CD14-positive monocyte (primary cell): ENCODE measurements at regions of chr6 and their contacts with region 1.

Region 1: GRCh38 chr6:32700391-32701040 is 34.1 kb upstream of the HLA-DQB1 start:
- DNase-seq: peak; percentile 29 to 67 (median 50)
- H3K4me3 ChIP-seq: no peak overlapping the region
- H3K4me3 Mint-ChIP-seq: peak overlapping the region in 1 of 2 donors; percentile 63
- H3K27ac ChIP-seq: no peak overlapping the region
- H3K27ac Mint-ChIP-seq: peak overlapping the region in 2 of 7 donors; percentile 47 to 54
- H3K4me1 ChIP-seq: peaks cover 7 to 8% of the 10 kb centered on the region in 2 donors
- H3K4me1 Mint-ChIP-seq: peaks cover 12% of the 10 kb centered on the region
- H3K27me3 ChIP-seq: peaks cover 8 to 20% of the 10 kb centered on the region in 2 donors
- H3K27me3 Mint-ChIP-seq: peaks cover 13 to 32% (median 26%) of the 10 kb centered on the region in 3 donors
- CTCF ChIP-seq: peak; percentile 80

Region 2: DNA sequence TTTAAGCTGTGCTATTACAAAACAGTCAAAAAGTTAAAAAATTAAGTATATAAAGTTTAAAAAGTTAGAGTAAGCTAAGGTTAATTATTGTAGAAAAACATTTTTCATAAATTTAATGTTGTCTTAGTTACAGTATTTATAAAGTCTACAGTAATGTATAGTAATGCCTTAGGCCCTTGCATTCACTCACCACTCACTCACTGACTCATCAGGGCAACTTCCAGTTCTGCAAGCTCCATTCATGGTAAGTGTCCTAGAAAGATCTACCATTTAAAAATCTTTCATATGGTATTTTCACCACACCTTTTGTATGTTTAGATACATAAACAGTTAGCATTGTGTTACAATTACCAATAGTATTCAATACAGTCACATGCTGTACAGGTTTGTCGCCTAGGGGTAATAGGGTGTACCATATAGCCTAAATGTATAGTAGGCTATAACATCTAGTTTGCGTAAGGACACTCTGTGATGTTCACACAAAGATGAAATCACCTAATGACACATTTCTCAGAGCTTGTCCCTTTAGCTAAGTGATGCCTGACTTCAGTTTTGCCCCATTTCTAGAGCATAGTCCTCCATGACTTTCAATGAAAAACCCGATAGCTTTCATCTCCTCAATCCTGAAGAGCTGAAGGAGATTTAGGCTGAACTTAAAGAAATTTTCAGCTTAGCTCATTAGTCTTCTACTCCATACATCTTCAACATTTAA is 275.8 kb before region 1 on chr6:
- intact Hi-C with region 1: loop called in 1 of 2 experiments (anchors 5 kb)
- DNase-seq: peak in 1 of 3 donors; percentile 35
- H3K4me3 ChIP-seq: no peak overlapping the region
- H3K4me3 Mint-ChIP-seq: no peak overlapping the region
- H3K27ac ChIP-seq: no peak overlapping the region
- H3K27ac Mint-ChIP-seq: no peak overlapping the region
- H3K4me1 ChIP-seq: no peaks in the 10 kb centered on the region
- H3K4me1 Mint-ChIP-seq: no peaks in the 10 kb centered on the region
- H3K27me3 ChIP-seq: peaks cover 0 to 5% of the 10 kb centered on the region in 2 donors
- H3K27me3 Mint-ChIP-seq: peaks cover 0 to 12% (median 7%) of the 10 kb centered on the region in 3 donors
- CTCF ChIP-seq: no peak

Region 3: GRCh38 chr6:32432050-32432450 is 268.5 kb before region 1 on chr6:
- intact Hi-C with region 1: loop called (anchors 5 kb)
- DNase-seq: peak; percentile 34 to 71 (median 62)
- H3K4me3 ChIP-seq: no peak overlapping the region
- H3K4me3 Mint-ChIP-seq: no peak overlapping the region
- H3K27ac ChIP-seq: no peak overlapping the region
- H3K27ac Mint-ChIP-seq: no peak overlapping the region
- H3K4me1 ChIP-seq: peaks cover 10 to 11% of the 10 kb centered on the region in 2 donors
- H3K4me1 Mint-ChIP-seq: peaks cover 9% of the 10 kb centered on the region
- H3K27me3 ChIP-seq: no peaks in the 10 kb centered on the region
- H3K27me3 Mint-ChIP-seq: peaks cover 0 to 2% (median 0%) of the 10 kb centered on the region in 3 donors
- CTCF ChIP-seq: peak; percentile 77

Region 4: DNA sequence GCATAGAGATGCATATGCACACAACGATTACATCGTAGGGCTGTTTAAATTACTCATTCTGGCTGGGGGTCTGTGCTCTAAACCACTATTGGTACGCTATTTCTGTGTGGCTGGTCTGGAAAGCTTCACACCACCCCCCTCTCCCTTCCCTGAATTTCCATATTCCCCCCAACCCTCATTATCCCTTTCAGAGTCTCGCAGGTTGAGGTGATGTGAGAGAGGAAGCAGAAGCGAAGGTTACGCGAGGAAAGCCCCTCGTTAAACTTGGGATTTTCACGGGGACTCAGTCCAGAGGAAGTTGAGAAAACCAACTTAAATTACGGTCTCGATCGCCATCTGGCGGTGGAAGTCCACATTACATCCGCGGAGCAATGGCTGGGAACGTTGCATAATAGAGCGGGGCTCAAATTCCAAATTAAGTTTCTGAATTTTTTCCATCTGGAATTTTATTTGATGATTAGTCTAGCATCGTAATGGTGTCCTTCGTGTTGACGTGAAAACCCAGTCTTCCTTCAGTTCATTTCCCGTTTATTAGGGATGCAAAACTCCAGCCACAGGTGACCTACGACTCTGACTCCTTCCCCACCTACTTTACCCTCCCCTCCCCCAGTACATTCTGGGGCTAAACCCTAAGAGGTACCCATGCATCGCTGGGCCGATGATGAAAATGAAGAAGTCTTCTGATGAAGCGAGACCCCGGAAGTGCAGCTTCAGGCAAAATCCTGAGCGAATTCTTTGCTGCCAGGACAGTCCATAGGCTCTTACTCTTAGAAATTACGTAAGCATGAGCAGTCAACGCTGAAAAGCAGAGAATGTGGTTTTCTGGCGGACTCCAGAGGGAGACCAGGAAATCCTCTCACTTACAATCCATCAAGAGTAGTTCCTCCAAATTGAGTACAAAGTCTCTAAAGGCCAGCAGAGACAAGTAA is 96.6 kb after region 1 on chr6:
- intact Hi-C with region 1: loop called in 1 of 2 experiments (anchors 10 kb)
- DNase-seq: peak; percentile 65 to 88 (median 76)
- H3K4me3 ChIP-seq: peak overlapping the region; percentile 0 to 69 (median 31)
- H3K4me3 Mint-ChIP-seq: peak overlapping the region; percentile 72 to 93
- H3K27ac ChIP-seq: peak overlapping the region; percentile 8 to 42
- H3K27ac Mint-ChIP-seq: peak overlapping the region; percentile 62 to 90 (median 87)
- H3K4me1 ChIP-seq: peaks cover 43 to 46% of the 10 kb centered on the region in 2 donors
- H3K4me1 Mint-ChIP-seq: peaks cover 43% of the 10 kb centered on the region
- H3K27me3 ChIP-seq: peaks cover 0 to 5% of the 10 kb centered on the region in 2 donors
- H3K27me3 Mint-ChIP-seq: peaks cover 0 to 4% (median 3%) of the 10 kb centered on the region in 3 donors
- CTCF ChIP-seq: peak; percentile 92